Lower lobe of right lung (tissue), 2 donors: ENCODE measurements at regions of chr15 and their contacts with region 1.

Region 1: DNA sequence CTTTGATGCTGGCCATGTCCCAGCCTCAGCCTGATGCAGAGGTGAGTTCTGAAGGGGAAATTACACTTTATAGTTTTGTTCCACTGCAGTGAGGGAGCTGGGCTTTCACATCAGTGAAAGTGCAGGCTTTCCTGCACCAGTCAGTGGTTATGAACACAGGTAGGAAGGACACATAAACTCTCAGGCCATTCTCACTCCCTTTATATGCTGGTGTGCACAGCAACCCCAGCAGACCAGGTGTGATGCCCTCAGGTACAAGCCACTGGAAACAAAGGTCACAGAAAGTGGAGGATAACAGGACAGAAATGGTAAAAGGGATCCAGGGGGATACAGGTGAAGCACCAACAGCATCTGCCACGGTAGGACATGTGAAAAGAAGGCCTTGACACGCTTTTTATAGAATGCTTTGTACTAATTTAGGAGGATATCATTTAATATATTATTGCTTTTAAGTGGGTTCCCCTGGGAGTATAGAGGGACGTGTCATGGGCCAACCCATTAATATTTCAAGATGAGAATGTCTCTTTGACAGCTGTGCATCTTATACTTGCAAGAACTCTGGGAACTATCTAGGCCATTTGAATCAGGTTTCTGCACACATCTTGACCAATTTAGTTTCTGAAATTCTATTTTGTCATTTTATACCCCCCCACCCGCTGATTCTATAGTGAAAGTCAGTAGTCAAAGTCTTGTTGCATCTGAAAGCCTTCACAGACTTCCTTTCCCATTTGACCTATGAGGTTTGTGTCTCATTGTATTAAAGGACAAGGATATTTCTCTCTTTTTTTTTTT is 25.0 kb upstream of the BLM start:
- DNase-seq: no peak
- ATAC-seq: no peak
- H3K4me3 ChIP-seq: no peak overlapping the region
- H3K27ac ChIP-seq: no peak overlapping the region
- H3K4me1 ChIP-seq: no peaks in the 10 kb centered on the region
- H3K27me3 ChIP-seq: no peaks in the 10 kb centered on the region
- CTCF ChIP-seq: no peak

Region 2: DNA sequence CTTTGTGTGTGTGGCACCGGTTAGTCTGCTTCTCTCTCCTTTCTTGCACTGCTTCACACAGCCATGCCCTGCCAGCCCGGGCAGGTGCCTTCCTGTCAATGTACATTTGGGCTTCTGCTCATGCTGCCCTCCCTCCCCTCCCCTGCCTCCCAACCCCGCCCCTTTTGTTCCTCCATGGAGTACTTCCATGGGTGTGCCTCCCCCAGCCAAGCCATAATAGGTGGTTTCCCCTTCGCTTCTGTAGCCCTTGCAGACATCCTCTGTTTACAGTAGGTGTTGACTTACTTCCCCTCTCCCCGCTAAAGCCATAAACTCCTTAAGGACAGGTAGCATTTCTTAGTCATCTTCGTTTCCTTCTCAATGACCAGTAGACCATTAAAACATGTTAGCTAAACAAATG is 194.3 kb before region 1 on chr15:
- intact Hi-C with region 1: loop called (anchors 10 kb)
- DNase-seq: no peak
- ATAC-seq: peak; percentile 80 to 84
- H3K4me3 ChIP-seq: no peak overlapping the region
- H3K27ac ChIP-seq: no peak overlapping the region
- H3K4me1 ChIP-seq: peaks cover 10% of the 10 kb centered on the region
- H3K27me3 ChIP-seq: no peaks in the 10 kb centered on the region
- CTCF ChIP-seq: no peak